ENCODE measurements at regions of chr3 and their contacts with region 1.

Region 1: GRCh38 chr3:39260957-39261356 is 18.9 kb downstream of the CX3CR1 start:
- DNase-seq: peak; percentile 92
- H3K4me3 Mint-ChIP-seq: no peak overlapping the region
- H3K27ac Mint-ChIP-seq: peak overlapping the region; percentile 89
- H3K4me1 Mint-ChIP-seq: no peaks in the 10 kb centered on the region
- H3K27me3 Mint-ChIP-seq: peaks cover 48% of the 10 kb centered on the region
- CTCF ChIP-seq: peak; percentile 27

Region 2: DNA sequence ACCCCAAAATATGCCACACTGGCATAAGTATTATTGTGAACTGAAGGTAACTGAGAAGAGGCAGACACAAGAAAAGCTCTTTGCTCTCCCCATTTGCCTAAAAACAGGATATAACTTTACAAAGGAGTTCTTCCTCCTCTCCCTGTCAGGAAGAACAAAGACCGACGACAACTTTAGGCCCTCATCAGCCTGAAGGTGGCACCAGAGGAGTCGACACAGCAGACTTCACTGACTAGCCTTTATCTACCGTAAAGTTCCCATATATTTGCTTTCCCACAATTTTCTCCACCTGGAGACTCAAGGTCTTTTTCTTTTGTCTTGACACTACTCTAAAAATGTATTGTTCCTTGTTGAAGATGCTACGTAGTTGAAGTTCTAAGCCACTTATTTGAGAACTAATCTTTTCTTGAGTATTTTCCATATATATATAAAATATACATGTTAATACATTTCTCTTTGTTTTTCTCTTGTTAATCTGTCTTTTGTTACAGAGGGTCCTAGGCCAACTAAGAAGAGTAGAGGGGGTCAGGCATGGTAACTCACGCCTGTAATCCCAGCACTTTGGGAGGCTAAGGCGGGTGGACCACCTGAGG is 52.4 kb before region 1 on chr3:
- CTCF ChIA-PET with region 1: interaction called, 13 read pairs
- POLR2A ChIA-PET with region 1: no interaction called
- intact Hi-C with region 1: loop called (anchors 1 kb)
- DNase-seq: peak; percentile 67
- H3K4me3 Mint-ChIP-seq: no peak overlapping the region
- H3K27ac Mint-ChIP-seq: no peak overlapping the region
- H3K4me1 Mint-ChIP-seq: no peaks in the 10 kb centered on the region
- H3K27me3 Mint-ChIP-seq: peaks cover 38% of the 10 kb centered on the region
- CTCF ChIP-seq: peak; percentile 39

Measured in MCF 10A (cell line).